A549 (cell line): ENCODE measurements at regions of chr7 and their contacts with region 1.

Region 1: GRCh38 chr7:67625257-67625737 is 628.7 kb downstream of the TYW1 start:
- DNase-seq: peak; percentile 76 to 77
- ATAC-seq: peak; percentile 89 to 98
- H3K4me3 ChIP-seq: peak overlapping the region; percentile 31
- H3K27ac ChIP-seq: peak overlapping the region; percentile 23 to 67; a peak in 3 of 6 replicates
- H3K4me1 ChIP-seq: no peaks in the 10 kb centered on the region
- CTCF ChIP-seq: peak; percentile 80
- EP300 ChIP-seq: no peak
- POLR2A ChIP-seq: no peak
- RAD21 ChIP-seq: peak; percentile 92 to 95

Region 2: GRCh38 chr7:67610897-67611296 is 14.4 kb before region 1 on chr7:
- CTCF ChIA-PET with region 1: interaction called, 17 read pairs
- POLR2A ChIA-PET with region 1: no interaction called
- DNase-seq: no peak
- ATAC-seq: no peak
- H3K4me3 ChIP-seq: no peak overlapping the region
- H3K27ac ChIP-seq: no peak overlapping the region
- H3K4me1 ChIP-seq: no peaks in the 10 kb centered on the region
- CTCF ChIP-seq: no peak
- EP300 ChIP-seq: no peak
- POLR2A ChIP-seq: no peak
- RAD21 ChIP-seq: no peak

Region 3: GRCh38 chr7:67637027-67637358 is 11.7 kb after region 1 on chr7:
- CTCF ChIA-PET with region 1: interaction called, 25 read pairs
- POLR2A ChIA-PET with region 1: no interaction called
- DNase-seq: no peak
- ATAC-seq: no peak
- H3K4me3 ChIP-seq: no peak overlapping the region
- H3K27ac ChIP-seq: no peak overlapping the region
- H3K4me1 ChIP-seq: no peaks in the 10 kb centered on the region
- CTCF ChIP-seq: peak; percentile 25; the same call in 2 of the 3 replicates
- EP300 ChIP-seq: no peak
- POLR2A ChIP-seq: no peak
- RAD21 ChIP-seq: peak; percentile 33 to 53; a peak in 4 of 5 replicates

Region 4: DNA sequence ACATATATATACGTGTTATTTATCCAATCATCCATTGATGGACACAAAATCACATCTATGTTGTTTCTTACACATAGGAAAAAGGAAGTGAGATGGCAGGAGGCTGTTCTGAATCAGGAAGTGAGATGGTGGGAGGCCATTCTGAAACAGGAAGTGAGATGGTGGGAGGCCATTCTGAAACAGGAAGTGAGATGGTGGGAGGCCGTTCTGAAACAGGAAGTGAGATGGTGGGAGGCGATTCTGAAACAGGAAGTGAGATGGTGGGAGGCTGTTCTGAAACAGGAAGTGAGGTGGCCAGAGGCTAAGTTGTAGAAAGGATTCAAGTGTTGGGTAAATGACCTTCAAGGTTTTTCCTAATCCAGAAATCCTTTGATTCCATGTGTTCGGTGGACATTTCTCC is 292.9 kb after region 1 on chr7:
- CTCF ChIA-PET with region 1: no interaction called
- POLR2A ChIA-PET with region 1: no interaction called
- DNase-seq: peak; percentile 26 to 68
- ATAC-seq: no peak
- H3K4me3 ChIP-seq: no peak overlapping the region
- H3K27ac ChIP-seq: no peak overlapping the region
- H3K4me1 ChIP-seq: 0 out of 3 replicates have a peak, but pooled peaks cover 6% of the 10 kb centered on the region
- CTCF ChIP-seq: no peak
- EP300 ChIP-seq: no peak
- POLR2A ChIP-seq: no peak
- RAD21 ChIP-seq: no peak

Region 5: GRCh38 chr7:67990003-67990402 is 364.7 kb after region 1 on chr7:
- CTCF ChIA-PET with region 1: no interaction called
- POLR2A ChIA-PET with region 1: no interaction called
- DNase-seq: no peak
- ATAC-seq: no peak
- H3K4me3 ChIP-seq: no peak overlapping the region
- H3K27ac ChIP-seq: no peak overlapping the region
- H3K4me1 ChIP-seq: no peaks in the 10 kb centered on the region
- CTCF ChIP-seq: no peak
- EP300 ChIP-seq: no peak
- POLR2A ChIP-seq: no peak
- RAD21 ChIP-seq: no peak